Activated naive CD4-positive, alpha-beta T cell treated with anti-CD3 and anti-CD28 coated beads for 36 hours (primary cell): ENCODE measurements at regions of chr15 and their contacts with region 1.

Region 1: DNA sequence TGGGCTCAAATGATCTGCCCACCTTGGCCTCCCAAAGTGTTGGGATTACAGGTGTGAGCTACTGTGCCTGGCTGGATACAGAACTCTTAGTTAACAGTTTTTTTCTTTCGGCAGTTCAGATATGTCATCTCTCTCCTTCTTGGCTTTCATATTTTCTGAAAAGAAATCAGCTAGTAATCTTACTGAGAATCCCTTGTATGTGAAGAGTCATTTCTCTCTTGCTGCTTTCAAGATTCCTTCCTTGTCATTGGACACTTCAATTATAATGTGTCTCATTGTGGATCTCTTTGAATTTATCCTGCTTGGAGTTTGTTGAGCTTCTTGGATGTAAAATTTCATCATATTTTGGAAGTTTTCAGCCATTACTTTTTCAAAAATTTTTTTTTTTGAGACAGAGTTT is 17.0 kb downstream of the TRIM69 start:
- DNase-seq: no peak
- H3K4me3 Mint-ChIP-seq: no peak overlapping the region
- H3K27ac Mint-ChIP-seq: no peak overlapping the region
- H3K4me1 Mint-ChIP-seq: peaks cover 27% of the 10 kb centered on the region
- H3K27me3 Mint-ChIP-seq: no peaks in the 10 kb centered on the region

Region 2: GRCh38 chr15:44633603-44634002 is 119.7 kb before region 1 on chr15:
- CTCF ChIA-PET with region 1: no interaction called
- intact Hi-C with region 1: loop called (anchors 1 kb)
- DNase-seq: peak; percentile 34
- H3K4me3 Mint-ChIP-seq: peak overlapping the region; percentile 65
- H3K27ac Mint-ChIP-seq: peak overlapping the region; percentile 98
- H3K4me1 Mint-ChIP-seq: peaks cover 34% of the 10 kb centered on the region
- H3K27me3 Mint-ChIP-seq: no peaks in the 10 kb centered on the region

Region 3: GRCh38 chr15:44788748-44789147 is 35.4 kb after region 1 on chr15:
- CTCF ChIA-PET with region 1: no interaction called
- intact Hi-C with region 1: loop called (anchors 1 kb)
- DNase-seq: peak; percentile 73
- H3K4me3 Mint-ChIP-seq: no peak overlapping the region
- H3K27ac Mint-ChIP-seq: peak overlapping the region; percentile 81
- H3K4me1 Mint-ChIP-seq: peaks cover 41% of the 10 kb centered on the region
- H3K27me3 Mint-ChIP-seq: no peaks in the 10 kb centered on the region

Region 4: DNA sequence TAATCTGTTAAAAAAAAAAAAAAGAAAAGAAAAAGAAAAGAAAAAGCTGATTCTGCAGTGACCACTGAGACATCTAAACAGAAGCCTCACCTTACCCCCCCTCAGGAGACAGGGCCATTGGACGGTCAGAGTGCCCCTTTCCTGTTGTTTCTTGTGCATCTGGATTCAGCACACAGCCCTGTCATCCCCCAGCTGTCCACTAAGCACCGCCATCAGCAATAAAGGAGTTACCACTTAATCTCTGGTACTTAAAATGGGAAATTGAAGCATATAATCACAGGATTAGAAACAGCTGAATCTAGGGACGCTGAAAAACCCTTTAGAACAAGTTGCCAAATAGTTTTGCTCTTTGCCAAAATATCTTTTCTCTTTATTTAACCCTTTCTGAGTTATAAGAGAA is 45.5 kb after region 1 on chr15:
- CTCF ChIA-PET with region 1: no interaction called
- intact Hi-C with region 1: no loop called
- DNase-seq: no peak
- H3K4me3 Mint-ChIP-seq: no peak overlapping the region
- H3K27ac Mint-ChIP-seq: no peak overlapping the region
- H3K4me1 Mint-ChIP-seq: peaks cover 2% of the 10 kb centered on the region
- H3K27me3 Mint-ChIP-seq: peaks cover 5% of the 10 kb centered on the region

Region 5: DNA sequence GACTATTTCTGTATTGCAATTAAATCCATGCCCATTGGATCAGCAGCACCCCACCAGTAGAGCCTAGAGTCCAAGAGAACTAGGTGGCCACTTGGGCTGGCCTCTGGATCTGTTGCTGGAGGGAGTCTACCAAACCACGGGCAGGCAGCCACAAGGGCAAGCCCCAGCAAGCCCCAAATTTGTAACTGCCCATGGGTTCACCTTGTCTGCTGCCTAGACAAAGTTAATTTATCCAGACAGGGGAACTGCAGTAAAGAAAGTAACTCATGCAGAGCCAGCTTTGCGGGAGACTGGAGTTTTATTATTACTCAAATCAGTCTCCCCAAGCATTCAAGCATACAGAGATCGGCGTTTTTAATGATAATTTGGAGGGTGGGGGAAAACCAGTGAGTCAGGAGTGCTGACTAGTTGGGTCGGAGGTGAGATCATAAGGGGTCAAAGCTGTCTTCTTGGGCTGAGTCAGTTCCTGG is 129.2 kb after region 1 on chr15:
- CTCF ChIA-PET with region 1: no interaction called
- intact Hi-C with region 1: loop called (anchors 1 kb)
- DNase-seq: peak; percentile 74
- H3K4me3 Mint-ChIP-seq: no peak overlapping the region
- H3K27ac Mint-ChIP-seq: no peak overlapping the region
- H3K4me1 Mint-ChIP-seq: peaks cover 25% of the 10 kb centered on the region
- H3K27me3 Mint-ChIP-seq: peaks cover 5% of the 10 kb centered on the region